ENCODE measurements at regions of chr11 and their contacts with region 1.

Region 1: DNA sequence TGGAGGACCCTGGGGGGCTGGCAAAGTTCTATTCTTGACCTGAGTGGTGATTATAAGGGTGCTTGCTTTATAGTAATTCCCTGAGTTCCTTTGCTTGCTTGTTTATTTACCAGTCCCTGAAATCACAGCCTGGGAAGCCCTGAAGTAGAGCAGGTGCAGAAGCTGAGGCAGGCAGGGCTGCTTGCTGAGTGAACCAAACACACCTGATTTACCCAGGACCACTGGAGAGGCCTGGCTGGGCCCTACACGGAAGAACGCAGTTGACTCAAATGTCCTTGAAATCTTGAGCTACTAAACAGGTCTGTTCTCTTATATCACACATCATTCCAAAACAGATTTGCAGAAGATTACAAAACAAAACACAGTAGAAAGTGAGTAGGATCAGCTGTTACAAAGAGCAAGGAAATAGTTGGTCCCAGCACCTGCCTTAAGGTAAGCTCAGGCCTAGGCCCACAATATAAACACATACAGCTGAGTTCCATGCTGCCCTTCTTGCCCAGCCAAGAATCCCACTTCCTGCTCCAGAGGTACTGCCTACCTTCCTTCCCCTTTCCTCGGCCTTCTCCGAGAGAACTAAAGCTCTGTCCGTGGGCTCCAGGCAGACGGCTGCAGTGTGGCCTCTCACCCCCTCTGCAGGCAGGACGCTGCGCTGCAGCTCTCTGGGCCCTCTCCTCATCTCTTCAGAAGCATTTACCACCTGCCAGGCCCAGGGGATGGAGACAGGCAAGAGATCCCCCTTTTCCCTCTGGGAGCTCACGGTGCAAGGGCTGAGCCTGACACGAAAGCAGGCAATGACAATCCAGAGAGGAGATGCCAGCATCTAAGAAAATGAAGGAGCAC is 46.1 kb upstream of the SCUBE2 start:
- DNase-seq: peak; percentile 78
- H3K4me3 Mint-ChIP-seq: no peak overlapping the region
- H3K27ac Mint-ChIP-seq: no peak overlapping the region
- H3K4me1 Mint-ChIP-seq: peaks cover 36% of the 10 kb centered on the region
- H3K27me3 Mint-ChIP-seq: no peaks in the 10 kb centered on the region

Region 2: GRCh38 chr11:8911029-8911826 is 226.3 kb before region 1 on chr11 and contains the start of gene AKIP1:
- CTCF ChIA-PET with region 1: interaction called, 10 read pairs
- POLR2A ChIA-PET with region 1: interaction called, 3 read pairs
- DNase-seq: peak; percentile 84
- H3K4me3 Mint-ChIP-seq: peak within 1 kb of the TSS; percentile 94
- H3K27ac Mint-ChIP-seq: peak within 1 kb of the TSS; percentile 84
- H3K4me1 Mint-ChIP-seq: peaks cover 51% of the 10 kb centered on the region
- H3K27me3 Mint-ChIP-seq: peaks cover 6% of the 10 kb centered on the region
- total RNA-seq, gene AKIP1: 36.0 to 38.1 TPM

Region 3: GRCh38 chr11:9015677-9016076 is 121.8 kb before region 1 on chr11:
- CTCF ChIA-PET with region 1: interaction called, 149 read pairs
- POLR2A ChIA-PET with region 1: interaction called, 9 read pairs
- DNase-seq: peak; percentile 65
- H3K4me3 Mint-ChIP-seq: no peak overlapping the region
- H3K27ac Mint-ChIP-seq: no peak overlapping the region
- H3K4me1 Mint-ChIP-seq: peaks cover 24% of the 10 kb centered on the region
- H3K27me3 Mint-ChIP-seq: peaks cover 14% of the 10 kb centered on the region

Region 4: GRCh38 chr11:9120664-9121485 is 16.6 kb before region 1 on chr11:
- CTCF ChIA-PET with region 1: interaction called, 13 read pairs
- POLR2A ChIA-PET with region 1: interaction called, 4 read pairs
- DNase-seq: no peak
- H3K4me3 Mint-ChIP-seq: no peak overlapping the region
- H3K27ac Mint-ChIP-seq: no peak overlapping the region
- H3K4me1 Mint-ChIP-seq: no peaks in the 10 kb centered on the region
- H3K27me3 Mint-ChIP-seq: peaks cover 7% of the 10 kb centered on the region

Region 5: DNA sequence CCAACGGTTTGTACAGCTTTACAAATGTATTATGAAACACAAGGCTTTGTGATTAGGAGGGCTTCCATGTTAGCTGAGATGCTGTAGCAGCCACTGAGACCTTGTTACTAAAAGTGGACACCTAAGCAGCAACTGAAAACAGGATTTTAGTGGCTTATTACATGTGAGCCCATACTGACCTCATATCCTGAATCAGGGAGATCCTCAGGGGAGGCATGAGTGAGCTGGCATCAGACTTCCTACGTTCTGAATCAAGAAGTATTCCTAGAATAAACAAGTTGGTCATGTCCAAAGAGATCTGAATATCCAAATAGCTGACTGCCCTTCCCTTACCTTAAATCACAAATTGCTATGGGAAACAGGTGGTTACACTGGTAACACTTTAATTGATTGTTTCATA is 13.0 kb after region 1 on chr11:
- CTCF ChIA-PET with region 1: interaction called, 23 read pairs
- POLR2A ChIA-PET with region 1: no interaction called
- DNase-seq: no peak
- H3K4me3 Mint-ChIP-seq: no peak overlapping the region
- H3K27ac Mint-ChIP-seq: no peak overlapping the region
- H3K4me1 Mint-ChIP-seq: peaks cover 3% of the 10 kb centered on the region
- H3K27me3 Mint-ChIP-seq: no peaks in the 10 kb centered on the region

Region 6: DNA sequence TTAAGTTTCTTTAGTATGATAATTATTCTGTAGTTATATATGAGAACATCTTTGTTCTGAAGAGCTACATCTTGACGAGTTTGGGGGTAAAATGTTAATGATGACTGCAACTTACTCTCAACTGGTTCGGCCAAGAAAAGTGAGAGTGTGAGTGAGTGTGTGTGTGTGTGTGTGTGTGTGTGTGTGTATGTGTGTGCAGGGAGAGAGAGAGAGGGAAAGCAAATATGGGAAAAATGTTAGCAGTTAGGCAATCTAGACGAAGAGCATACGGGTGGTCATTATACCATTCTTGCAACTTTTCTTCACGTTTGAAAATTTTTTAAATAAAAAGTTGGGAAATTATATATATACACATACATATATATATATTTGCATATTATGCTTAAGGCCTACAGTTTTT is 195.1 kb after region 1 on chr11:
- CTCF ChIA-PET with region 1: no interaction called
- POLR2A ChIA-PET with region 1: no interaction called
- DNase-seq: no peak
- H3K4me3 Mint-ChIP-seq: no peak overlapping the region
- H3K27ac Mint-ChIP-seq: no peak overlapping the region
- H3K4me1 Mint-ChIP-seq: no peaks in the 10 kb centered on the region
- H3K27me3 Mint-ChIP-seq: no peaks in the 10 kb centered on the region

Measured in activated CD4-positive, alpha-beta memory T cell treated with anti-CD3 and anti-CD28 coated beads, Interleukin-2, amount 10 ng/mL, durations not matched to agents 7 days and 5 days (primary cell).